Activated T-helper 1 cell treated with anti-CD3 and anti-CD28 coated beads, Interleukin-12 subunit alpha, Interleukin-12 subunit beta, Interleukin-2, Interleukin-4 antibody, amounts not matched to agents 30 ng/mL and 10 ng/mL and 1 ng/mL, durations not matched to agents 14 hours and 24 hours and 36 hours (primary cell): ENCODE measurements at regions of chr7 and their contacts with region 1.

Region 1: GRCh38 chr7:10973061-10973944 is at the start of gene PHF14:
- DNase-seq: peak; percentile 94
- H3K4me3 Mint-ChIP-seq: peak within 1 kb of the TSS; percentile 97
- H3K27ac Mint-ChIP-seq: peak within 1 kb of the TSS; percentile 90
- H3K4me1 Mint-ChIP-seq: peaks cover 39% of the 10 kb centered on the region
- H3K27me3 Mint-ChIP-seq: peaks cover 10% of the 10 kb centered on the region
- total RNA-seq, gene PHF14: 42.9 and 43.8 TPM in 2 replicates

Region 2: GRCh38 chr7:11193131-11193811 is 220.0 kb after region 1 on chr7:
- intact Hi-C with region 1: loop called (anchors 5 kb)
- DNase-seq: no peak
- H3K4me3 Mint-ChIP-seq: peak overlapping the region; percentile 66
- H3K27ac Mint-ChIP-seq: peak overlapping the region; percentile 75
- H3K4me1 Mint-ChIP-seq: peaks cover 19% of the 10 kb centered on the region
- H3K27me3 Mint-ChIP-seq: peaks cover 5% of the 10 kb centered on the region